Activated CD8-positive, alpha-beta T cell treated with anti-CD3 and anti-CD28 coated beads for 36 hours (primary cell): ENCODE measurements at regions of chr3 and their contacts with region 1.

Region 1: GRCh38 chr3:122101646-122102045 is 46.5 kb downstream of the CD86 start:
- DNase-seq: peak; percentile 21
- ATAC-seq: peak; percentile 58
- H3K4me3 Mint-ChIP-seq: peak overlapping the region; percentile 12
- H3K27ac Mint-ChIP-seq: peak overlapping the region; percentile 89
- H3K4me1 Mint-ChIP-seq: peaks cover 39% of the 10 kb centered on the region
- H3K27me3 Mint-ChIP-seq: no peaks in the 10 kb centered on the region
- CTCF ChIP-seq: peak; percentile 63

Region 2: GRCh38 chr3:121545574-121546455 is 555.8 kb before region 1 on chr3 and contains the start of gene POLQ:
- CTCF ChIA-PET with region 1: interaction called, 11 read pairs
- POLR2A ChIA-PET with region 1: no interaction called
- intact Hi-C with region 1: no loop called
- DNase-seq: peak; percentile 95
- ATAC-seq: peak; percentile 97
- H3K4me3 Mint-ChIP-seq: peak within 1 kb of the TSS; percentile 99
- H3K27ac Mint-ChIP-seq: peak within 1 kb of the TSS; percentile 89
- H3K4me1 Mint-ChIP-seq: peaks cover 7% of the 10 kb centered on the region
- H3K27me3 Mint-ChIP-seq: no peaks in the 10 kb centered on the region
- CTCF ChIP-seq: no peak
- total RNA-seq, gene POLQ: 22.0 to 23.6 TPM

Region 3: DNA sequence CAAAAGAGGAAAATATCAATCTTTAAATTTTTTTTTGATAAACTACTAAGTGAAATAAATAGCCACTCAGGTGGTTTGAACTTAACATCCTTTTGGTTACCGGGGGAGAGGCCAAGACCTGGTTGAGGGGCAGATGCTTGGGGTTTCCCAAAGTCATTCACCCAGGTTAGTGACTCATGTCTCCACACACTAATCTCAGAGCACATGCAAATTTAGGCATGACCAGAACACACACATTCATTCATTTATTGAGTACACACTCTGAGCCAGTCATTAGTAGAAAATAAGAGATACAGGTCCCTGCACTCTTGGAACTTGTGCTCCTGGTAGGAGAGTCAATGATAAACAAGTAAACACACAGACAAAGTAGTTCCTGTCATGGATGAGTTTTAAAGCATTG is 86.9 kb before region 1 on chr3:
- CTCF ChIA-PET with region 1: no interaction called
- POLR2A ChIA-PET with region 1: no interaction called
- intact Hi-C with region 1: no loop called
- DNase-seq: peak; percentile 50
- ATAC-seq: peak; percentile 95
- H3K4me3 Mint-ChIP-seq: no peak overlapping the region
- H3K27ac Mint-ChIP-seq: no peak overlapping the region
- H3K4me1 Mint-ChIP-seq: no peaks in the 10 kb centered on the region
- H3K27me3 Mint-ChIP-seq: peaks cover 34% of the 10 kb centered on the region
- CTCF ChIP-seq: no peak

Region 4: DNA sequence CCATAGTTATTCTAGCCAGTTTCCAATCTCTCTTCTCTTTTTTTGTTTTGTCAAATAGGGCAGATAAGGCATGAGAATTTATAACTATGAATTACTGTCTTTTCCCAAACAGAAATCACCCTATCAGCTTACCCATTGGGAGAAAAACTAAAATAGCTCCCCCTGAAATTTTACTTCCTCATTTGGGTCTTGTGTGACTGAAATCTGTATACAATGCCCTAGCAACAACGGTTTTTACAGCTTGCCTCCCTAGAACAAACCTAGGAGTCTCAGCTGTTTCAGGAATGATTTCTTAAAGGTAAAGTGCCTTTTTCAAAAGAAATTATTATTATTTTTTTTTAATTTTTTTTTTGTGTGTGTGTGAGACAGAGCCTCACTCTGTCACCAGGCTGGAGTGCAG is 10.3 kb after region 1 on chr3:
- CTCF ChIA-PET with region 1: interaction called, 14 read pairs
- POLR2A ChIA-PET with region 1: no interaction called
- intact Hi-C with region 1: no loop called
- DNase-seq: no peak
- ATAC-seq: no peak
- H3K4me3 Mint-ChIP-seq: no peak overlapping the region
- H3K27ac Mint-ChIP-seq: no peak overlapping the region
- H3K4me1 Mint-ChIP-seq: no peaks in the 10 kb centered on the region
- H3K27me3 Mint-ChIP-seq: peaks cover 9% of the 10 kb centered on the region
- CTCF ChIP-seq: no peak

Region 5: GRCh38 chr3:122146466-122146865 is 44.8 kb after region 1 on chr3:
- CTCF ChIA-PET with region 1: interaction called, 4 read pairs
- POLR2A ChIA-PET with region 1: no interaction called
- intact Hi-C with region 1: loop called (anchors 5 kb)
- DNase-seq: peak; percentile 87
- ATAC-seq: peak; percentile 99
- H3K4me3 Mint-ChIP-seq: no peak overlapping the region
- H3K27ac Mint-ChIP-seq: peak overlapping the region; percentile 81
- H3K4me1 Mint-ChIP-seq: peaks cover 25% of the 10 kb centered on the region
- H3K27me3 Mint-ChIP-seq: peaks cover 5% of the 10 kb centered on the region
- CTCF ChIP-seq: no peak

Region 6: DNA sequence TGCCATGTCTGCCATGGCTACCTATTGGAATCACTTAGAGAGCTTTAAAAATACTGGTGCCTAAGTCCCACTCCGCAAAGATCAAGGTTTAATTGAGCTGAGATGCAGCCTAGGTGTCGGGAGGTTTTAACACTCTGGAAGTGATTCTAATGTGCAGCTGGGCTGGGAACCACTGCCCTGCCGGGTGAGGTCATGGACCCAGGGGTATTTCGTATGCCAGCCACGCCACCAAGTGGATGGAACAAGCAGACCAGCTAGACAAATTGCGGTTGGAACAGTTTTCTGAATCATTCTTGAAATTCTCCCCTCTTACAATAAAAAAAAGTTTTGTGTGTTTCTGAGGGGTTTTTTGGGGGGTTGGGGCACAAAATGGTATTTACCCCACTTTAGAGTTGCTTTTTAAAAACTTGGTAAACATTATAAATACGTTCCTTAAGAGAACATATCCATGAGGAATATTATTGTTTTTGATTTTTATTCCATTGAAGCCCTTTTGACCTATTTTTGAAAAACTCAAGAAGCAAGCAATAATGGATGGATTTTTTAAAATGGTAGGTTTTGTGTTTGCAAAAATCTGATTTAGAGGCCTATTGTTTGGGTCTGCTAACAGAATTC is 157.2 kb after region 1 on chr3:
- CTCF ChIA-PET with region 1: interaction called, 53 read pairs
- POLR2A ChIA-PET with region 1: no interaction called
- intact Hi-C with region 1: loop called (anchors 1 kb)
- DNase-seq: peak; percentile 86
- ATAC-seq: peak; percentile 91
- H3K4me3 Mint-ChIP-seq: no peak overlapping the region
- H3K27ac Mint-ChIP-seq: peak overlapping the region; percentile 43
- H3K4me1 Mint-ChIP-seq: peaks cover 21% of the 10 kb centered on the region
- H3K27me3 Mint-ChIP-seq: peaks cover 3% of the 10 kb centered on the region
- CTCF ChIP-seq: peak; percentile 71

Region 7: GRCh38 chr3:122299872-122300460 is 198.3 kb after region 1 on chr3:
- CTCF ChIA-PET with region 1: interaction called, 80 read pairs
- POLR2A ChIA-PET with region 1: interaction called, 3 read pairs
- intact Hi-C with region 1: loop called (anchors 1 kb)
- DNase-seq: peak; percentile 54
- ATAC-seq: peak; percentile 69
- H3K4me3 Mint-ChIP-seq: no peak overlapping the region
- H3K27ac Mint-ChIP-seq: no peak overlapping the region
- H3K4me1 Mint-ChIP-seq: peaks cover 20% of the 10 kb centered on the region
- H3K27me3 Mint-ChIP-seq: no peaks in the 10 kb centered on the region
- CTCF ChIP-seq: peak; percentile 79

Region 8: GRCh38 chr3:122305818-122306621 is 204.4 kb after region 1 on chr3:
- CTCF ChIA-PET with region 1: interaction called, 80 read pairs
- POLR2A ChIA-PET with region 1: no interaction called
- intact Hi-C with region 1: no loop called
- DNase-seq: peak; percentile 31
- ATAC-seq: peak; percentile 30
- H3K4me3 Mint-ChIP-seq: no peak overlapping the region
- H3K27ac Mint-ChIP-seq: no peak overlapping the region
- H3K4me1 Mint-ChIP-seq: no peaks in the 10 kb centered on the region
- H3K27me3 Mint-ChIP-seq: no peaks in the 10 kb centered on the region
- CTCF ChIP-seq: no peak